Common myeloid progenitor, CD34-positive (primary cell): ENCODE measurements at regions of chr2 and their contacts with region 1.

Region 1: DNA sequence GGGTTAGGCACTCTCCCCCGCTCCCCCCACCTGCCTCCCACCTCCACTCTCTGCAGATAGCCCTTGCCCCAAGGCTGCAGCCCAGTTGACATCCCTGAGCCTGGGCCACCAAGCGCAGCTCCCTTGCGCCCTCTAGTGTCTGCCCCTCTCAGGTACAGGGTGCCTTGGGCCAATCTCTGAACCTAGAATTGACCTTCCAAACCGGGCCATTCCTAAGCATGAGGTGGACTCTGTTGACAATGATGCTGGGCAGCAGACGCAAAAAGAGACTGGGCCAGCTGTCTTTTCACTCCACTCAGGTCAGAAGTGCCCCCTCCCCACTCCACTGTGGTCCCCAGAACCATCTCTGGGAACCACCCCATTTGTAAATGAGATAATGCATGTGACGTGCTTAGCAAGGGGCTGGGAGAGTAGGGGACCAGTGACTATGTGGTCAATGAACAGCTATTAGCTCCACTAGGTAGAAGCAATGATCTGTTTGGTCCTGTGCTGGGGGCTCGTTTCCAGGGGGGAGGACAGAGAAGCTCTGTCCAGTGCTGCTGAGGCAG is 43.3 kb upstream of the PLB1 start:
- DNase-seq: peak; percentile 55 to 69 (median 60)
- H3K4me3 ChIP-seq: no peak overlapping the region
- H3K27ac ChIP-seq: no peak overlapping the region
- H3K4me1 ChIP-seq: peaks cover 5 to 21% (median 19%) of the 10 kb centered on the region in 4 experiments
- H3K27me3 ChIP-seq: no peaks in the 10 kb centered on the region

Region 2: GRCh38 chr2:27703638-27704341 is 748.8 kb before region 1 on chr2:
- CTCF ChIA-PET with region 1: interaction called, 14 read pairs
- POLR2A ChIA-PET with region 1: no interaction called
- DNase-seq: peak; percentile 85 to 95 (median 90)
- H3K4me3 ChIP-seq: no peak overlapping the region
- H3K27ac ChIP-seq: no peak overlapping the region
- H3K4me1 ChIP-seq: peaks cover 0 to 7% (median 1%) of the 10 kb centered on the region in 4 experiments
- H3K27me3 ChIP-seq: peaks cover 0 to 2% (median 0%) of the 10 kb centered on the region in 5 experiments

Region 3: DNA sequence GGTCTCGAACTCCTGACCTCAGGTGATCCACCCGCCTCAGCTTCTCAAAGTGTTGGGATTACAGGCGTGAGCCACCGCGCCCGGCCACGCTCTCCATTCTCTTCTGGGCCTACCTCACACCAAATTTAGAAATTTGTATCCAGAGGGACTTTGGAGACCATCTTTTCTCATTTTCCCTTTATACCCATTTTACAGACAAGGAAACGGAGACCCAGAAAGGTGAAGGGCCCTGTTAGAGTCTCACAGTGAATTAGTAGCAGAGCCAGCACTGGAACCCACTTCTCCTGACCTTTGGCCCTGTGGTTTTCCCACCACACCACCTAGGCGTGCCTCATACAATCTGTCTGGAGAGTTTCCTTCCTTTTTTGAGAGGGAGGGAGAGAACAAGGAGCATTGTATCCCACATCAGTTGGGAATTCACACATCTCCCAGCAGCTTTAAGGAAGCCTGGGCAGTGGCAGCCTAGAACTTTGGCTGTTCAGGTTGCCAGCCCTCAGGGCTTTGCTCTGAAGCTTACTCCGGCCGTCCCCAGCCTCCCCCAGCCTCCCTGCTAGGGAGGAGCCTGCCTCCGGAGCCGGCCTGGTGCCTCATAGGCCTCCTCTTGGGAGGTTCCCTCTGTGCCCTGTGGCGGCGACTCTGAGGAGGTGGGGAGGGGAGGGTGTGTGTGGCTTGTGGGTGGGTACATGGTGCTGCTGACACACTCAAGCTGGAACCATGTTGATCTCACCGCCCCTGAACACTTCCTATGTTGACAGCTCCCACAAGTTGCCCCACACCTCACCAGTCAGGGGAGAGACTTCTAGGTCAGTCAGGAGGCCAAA is 46.1 kb before region 1 on chr2:
- CTCF ChIA-PET with region 1: interaction called, 13 read pairs
- POLR2A ChIA-PET with region 1: interaction called, 3 read pairs
- DNase-seq: peak; percentile 57 to 86 (median 85)
- H3K4me3 ChIP-seq: no peak overlapping the region
- H3K27ac ChIP-seq: no peak overlapping the region
- H3K4me1 ChIP-seq: peaks cover 9 to 61% (median 51%) of the 10 kb centered on the region in 4 experiments
- H3K27me3 ChIP-seq: no peaks in the 10 kb centered on the region

Region 4: GRCh38 chr2:28413142-28413898 is 39.3 kb before region 1 on chr2:
- CTCF ChIA-PET with region 1: interaction called, 19 read pairs
- POLR2A ChIA-PET with region 1: no interaction called
- DNase-seq: peak in 1 of 3 donors; percentile 39
- H3K4me3 ChIP-seq: no peak overlapping the region
- H3K27ac ChIP-seq: no peak overlapping the region
- H3K4me1 ChIP-seq: peaks cover 4 to 37% (median 29%) of the 10 kb centered on the region in 4 experiments
- H3K27me3 ChIP-seq: no peaks in the 10 kb centered on the region

Region 5: GRCh38 chr2:28463893-28464292 is 11.3 kb after region 1 on chr2:
- CTCF ChIA-PET with region 1: interaction called, 12 read pairs
- POLR2A ChIA-PET with region 1: interaction called, 3 read pairs
- DNase-seq: peak in 2 of 3 donors; percentile 51 to 54
- H3K4me3 ChIP-seq: no peak overlapping the region
- H3K27ac ChIP-seq: no peak overlapping the region
- H3K4me1 ChIP-seq: peaks cover 0 to 27% (median 9%) of the 10 kb centered on the region in 4 experiments
- H3K27me3 ChIP-seq: no peaks in the 10 kb centered on the region